IMR-90 (cell line): ENCODE measurements at regions of chr11 and their contacts with region 1.

Region 1: DNA sequence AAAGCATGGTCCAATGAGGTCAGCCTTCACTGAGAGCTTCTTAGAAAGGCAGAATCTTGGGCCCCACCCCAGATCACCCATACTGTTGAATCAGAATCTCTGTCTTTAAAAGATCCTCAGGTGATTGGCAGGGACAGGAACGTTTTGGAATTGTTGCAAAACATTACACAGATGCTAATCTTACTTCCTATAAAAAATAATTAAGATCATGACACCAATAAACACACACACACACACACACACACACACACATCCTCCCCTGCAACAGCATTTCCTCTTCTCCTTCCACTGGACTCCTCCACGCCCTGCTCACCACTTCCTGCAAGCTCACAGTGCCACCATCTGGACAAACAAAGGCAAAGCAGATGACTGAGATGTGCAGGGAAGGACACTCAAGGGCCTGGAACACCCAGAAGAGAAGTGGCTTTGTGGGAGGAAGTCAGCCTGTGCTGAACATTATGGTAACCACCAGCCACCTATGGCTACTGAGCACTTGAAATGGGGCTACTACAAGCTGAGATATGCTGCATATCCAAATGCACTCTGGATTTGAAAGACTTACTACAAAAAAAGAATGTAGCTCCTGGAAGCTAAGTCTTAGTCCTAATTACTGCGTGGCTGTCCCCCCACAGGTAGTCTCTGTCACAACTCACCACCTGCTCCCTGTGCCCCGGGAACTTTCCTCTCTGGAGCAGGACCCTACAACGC is 65.6 kb downstream of the BTG4 start:
- DNase-seq: peak; percentile 94
- ATAC-seq: peak; percentile 98
- H3K4me3 ChIP-seq: no peak overlapping the region
- H3K27ac ChIP-seq: no peak overlapping the region
- H3K4me1 ChIP-seq: no peaks in the 10 kb centered on the region; the same call in 1 of the 2 replicates
- H3K27me3 ChIP-seq: no peaks in the 10 kb centered on the region; the same call in 1 of the 2 replicates
- CTCF ChIP-seq: peak; percentile 95
- POLR2A ChIP-seq: 0 out of 2 replicates have a peak, but pooled peaks have one; percentile 48
- RAD21 ChIP-seq: peak; percentile 99

Region 2: GRCh38 chr11:110463153-110463552 is 983.4 kb before region 1 on chr11:
- CTCF ChIA-PET with region 1: interaction called, 4 read pairs
- POLR2A ChIA-PET with region 1: no interaction called
- dilution Hi-C with region 1: no loop called
- in situ Hi-C with region 1: loop called (anchors 25 kb)
- intact Hi-C with region 1: loop called (anchors 5 kb)
- DNase-seq: peak; percentile 66
- ATAC-seq: peak; percentile 96
- H3K4me3 ChIP-seq: no peak overlapping the region
- H3K27ac ChIP-seq: no peak overlapping the region
- H3K4me1 ChIP-seq: no peaks in the 10 kb centered on the region
- H3K27me3 ChIP-seq: no peaks in the 10 kb centered on the region
- CTCF ChIP-seq: peak; percentile 59
- POLR2A ChIP-seq: no peak
- RAD21 ChIP-seq: peak; percentile 83

Region 3: DNA sequence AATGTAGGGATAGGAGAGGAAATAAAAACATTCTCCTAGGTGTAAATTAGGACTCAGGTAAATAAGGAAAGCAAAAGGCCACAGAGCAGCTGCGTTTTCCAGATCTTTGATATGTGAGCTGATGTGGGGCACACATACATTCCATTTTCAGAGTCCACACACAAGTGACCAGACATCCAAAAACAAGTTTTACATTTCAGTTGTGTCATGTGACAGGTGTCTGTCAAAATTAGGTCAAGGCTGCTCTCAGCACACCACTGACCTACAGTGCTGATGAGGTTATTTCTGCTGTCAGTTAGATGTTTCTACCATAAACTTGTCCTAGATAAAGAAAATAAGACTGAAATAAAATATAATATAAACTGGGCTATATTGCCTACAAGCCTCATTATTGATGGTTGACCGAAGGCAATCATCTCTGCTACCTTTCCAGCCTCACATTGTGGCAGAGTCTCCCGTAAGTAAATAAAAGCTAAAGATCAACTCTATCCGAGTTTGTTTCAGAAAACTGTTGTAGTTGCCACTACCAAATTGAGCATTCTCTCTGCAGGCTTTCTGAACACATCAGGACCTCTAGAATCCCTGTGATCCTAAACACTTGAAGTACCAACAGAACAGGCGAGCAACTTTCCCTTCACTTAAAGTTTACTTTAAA is 742.2 kb before region 1 on chr11:
- CTCF ChIA-PET with region 1: no interaction called
- POLR2A ChIA-PET with region 1: no interaction called
- dilution Hi-C with region 1: no loop called
- in situ Hi-C with region 1: no loop called
- intact Hi-C with region 1: no loop called
- DNase-seq: no peak
- ATAC-seq: no peak
- H3K4me3 ChIP-seq: no peak overlapping the region
- H3K27ac ChIP-seq: no peak overlapping the region
- H3K4me1 ChIP-seq: no peaks in the 10 kb centered on the region
- H3K27me3 ChIP-seq: no peaks in the 10 kb centered on the region
- CTCF ChIP-seq: no peak
- POLR2A ChIP-seq: no peak
- RAD21 ChIP-seq: no peak

Region 4: DNA sequence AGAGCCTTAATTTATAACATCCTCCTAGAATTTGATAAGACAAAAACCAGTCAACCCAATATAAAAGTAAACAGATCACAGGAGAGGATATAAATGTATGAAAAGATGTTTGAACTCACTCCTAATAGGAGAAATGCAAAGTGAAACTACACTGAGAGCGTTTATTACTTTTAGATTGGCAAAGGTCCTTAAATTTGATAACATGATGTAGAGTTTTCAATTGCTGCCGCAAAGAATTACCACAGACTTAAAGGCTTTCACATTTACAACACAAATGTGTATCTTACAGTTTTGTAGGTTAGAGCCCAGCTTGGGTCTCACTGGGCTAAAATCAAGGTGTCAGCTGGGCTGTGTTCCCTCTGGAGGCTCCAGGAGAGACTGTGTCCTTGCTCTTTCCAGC is 210.2 kb before region 1 on chr11:
- CTCF ChIA-PET with region 1: no interaction called
- POLR2A ChIA-PET with region 1: no interaction called
- dilution Hi-C with region 1: no loop called
- in situ Hi-C with region 1: no loop called
- intact Hi-C with region 1: loop called (anchors 5 kb)
- DNase-seq: peak; percentile 5
- ATAC-seq: peak; percentile 18; the same call in 1 of the 2 replicates
- H3K4me3 ChIP-seq: no peak overlapping the region
- H3K27ac ChIP-seq: no peak overlapping the region
- H3K4me1 ChIP-seq: peaks cover 5% of the 10 kb centered on the region
- H3K27me3 ChIP-seq: peaks cover 6% of the 10 kb centered on the region
- CTCF ChIP-seq: no peak
- POLR2A ChIP-seq: no peak
- RAD21 ChIP-seq: no peak